ENCODE measurements at regions of chr14 and their contacts with region 1.

Region 1: DNA sequence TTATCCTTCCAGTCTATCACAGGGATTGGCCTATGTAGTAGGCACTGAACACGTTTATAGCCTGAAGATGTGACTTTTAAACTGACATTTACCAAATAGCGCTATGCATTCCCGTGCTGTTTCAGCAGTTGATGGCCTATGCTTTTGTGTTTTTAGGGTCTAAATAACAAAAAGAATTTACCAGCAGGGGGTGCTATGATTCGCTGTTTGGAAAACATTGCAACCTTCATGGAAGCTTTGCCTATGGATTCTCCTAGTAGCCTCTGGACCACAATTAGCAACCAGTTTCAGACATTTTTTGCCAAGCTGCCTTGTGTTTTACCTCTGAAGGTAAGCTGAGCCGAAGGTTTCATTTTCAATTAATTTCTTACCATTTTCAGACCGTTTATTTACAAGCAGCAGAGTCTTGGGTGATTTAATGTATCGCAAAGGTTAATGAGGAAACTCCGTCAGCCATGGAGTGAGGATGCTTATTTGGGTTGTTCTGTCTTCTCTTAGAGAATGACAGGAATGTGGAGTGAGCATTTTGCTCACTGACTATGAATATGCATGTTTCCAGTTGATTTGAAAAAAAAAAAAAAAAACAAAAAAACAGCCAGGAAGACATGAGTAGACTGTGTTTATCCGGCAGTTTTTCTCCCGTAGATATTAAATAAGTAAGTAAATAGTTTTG is 133.1 kb downstream of the PRIMA1 start:
- DNase-seq: no peak
- H3K4me3 ChIP-seq: no peak overlapping the region
- H3K27ac ChIP-seq: no peak overlapping the region
- H3K4me1 ChIP-seq: no peaks in the 10 kb centered on the region
- H3K27me3 ChIP-seq: no peaks in the 10 kb centered on the region
- CTCF ChIP-seq: peak; percentile 45 to 68 (median 60)

Region 2: GRCh38 chr14:93892923-93893558 is 237.8 kb after region 1 on chr14:
- intact Hi-C with region 1: loop called (anchors 1 kb)
- DNase-seq: peak in 1 of 2 donors; percentile 84
- H3K4me3 ChIP-seq: no peak overlapping the region
- H3K27ac ChIP-seq: no peak overlapping the region
- H3K4me1 ChIP-seq: peaks cover 0 to 8% of the 10 kb centered on the region in 2 donors
- H3K27me3 ChIP-seq: no peaks in the 10 kb centered on the region
- CTCF ChIP-seq: peak; percentile 79 to 99 (median 98)

Region 3: GRCh38 chr14:93906341-93907329 is 251.4 kb after region 1 on chr14:
- intact Hi-C with region 1: loop called (anchors 2 kb)
- DNase-seq: peak in 1 of 2 donors; percentile 69
- H3K4me3 ChIP-seq: no peak overlapping the region
- H3K27ac ChIP-seq: no peak overlapping the region
- H3K4me1 ChIP-seq: no peaks in the 10 kb centered on the region
- H3K27me3 ChIP-seq: no peaks in the 10 kb centered on the region
- CTCF ChIP-seq: peak in 2 of 3 experiments; percentile 51 to 61